Calu3 (cell line): ENCODE measurements at regions of chr19 and their contacts with region 1.

Region 1: DNA sequence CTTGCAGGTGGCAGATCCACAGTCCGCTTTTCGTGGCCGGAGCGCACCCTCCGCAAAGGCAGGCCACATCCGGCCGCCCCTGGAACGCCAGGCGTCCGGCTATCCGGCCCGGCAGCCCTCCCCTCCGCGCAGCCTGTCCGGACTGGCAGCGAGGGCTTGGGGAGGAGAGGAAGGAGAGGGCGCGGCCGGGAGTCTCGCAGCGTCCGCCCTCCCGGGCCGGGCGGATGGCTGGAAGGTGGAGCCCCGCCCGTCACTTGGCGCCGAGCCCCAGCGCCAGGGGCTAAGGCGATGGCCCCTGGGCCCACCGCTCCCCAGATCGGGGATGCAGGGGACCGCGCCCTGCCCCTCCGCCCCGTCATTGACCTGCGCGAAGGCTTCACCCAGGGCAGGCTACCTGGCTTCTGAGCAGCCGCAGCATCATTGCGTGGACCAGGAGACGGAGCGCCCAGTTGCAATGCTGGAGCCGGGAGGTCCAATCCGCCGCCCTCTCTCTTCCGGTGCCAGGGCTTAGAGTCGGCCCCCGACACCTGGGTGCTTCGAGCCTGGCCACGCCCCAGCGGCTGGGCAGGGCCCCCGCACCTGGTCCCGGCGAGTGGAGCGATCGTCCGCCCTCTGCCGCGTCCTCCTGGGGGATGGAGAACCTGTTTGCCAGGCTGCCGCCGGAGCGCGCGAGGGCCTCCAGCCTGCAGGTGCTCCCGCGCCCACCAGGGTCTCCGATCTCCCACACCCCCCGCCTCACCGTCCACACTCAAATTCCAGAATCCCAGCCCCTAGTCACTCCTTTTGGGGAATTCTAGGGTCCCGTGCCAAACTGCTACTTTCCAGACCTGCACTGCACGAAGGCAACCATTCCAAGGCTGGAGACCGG is at the start of gene FUT1:
- DNase-seq: peak; percentile 97
- H3K4me3 Mint-ChIP-seq: peak within 1 kb of the TSS; percentile 71
- H3K27ac Mint-ChIP-seq: peak within 1 kb of the TSS; percentile 25
- H3K4me1 Mint-ChIP-seq: peaks cover 22% of the 10 kb centered on the region
- H3K27me3 Mint-ChIP-seq: no peaks in the 10 kb centered on the region
- CTCF ChIP-seq: peak; percentile 38
- total RNA-seq, gene FUT1: 2.6 and 2.9 TPM in 2 replicates

Region 2: GRCh38 chr19:48713864-48714758 is 38.6 kb before region 1 on chr19:
- CTCF ChIA-PET with region 1: interaction called, 12 read pairs
- intact Hi-C with region 1: no loop called
- DNase-seq: peak; percentile 100
- H3K4me3 Mint-ChIP-seq: peak overlapping the region; percentile 89
- H3K27ac Mint-ChIP-seq: peak overlapping the region; percentile 65
- H3K4me1 Mint-ChIP-seq: peaks cover 21% of the 10 kb centered on the region
- H3K27me3 Mint-ChIP-seq: peaks cover 11% of the 10 kb centered on the region
- CTCF ChIP-seq: no peak

Region 3: DNA sequence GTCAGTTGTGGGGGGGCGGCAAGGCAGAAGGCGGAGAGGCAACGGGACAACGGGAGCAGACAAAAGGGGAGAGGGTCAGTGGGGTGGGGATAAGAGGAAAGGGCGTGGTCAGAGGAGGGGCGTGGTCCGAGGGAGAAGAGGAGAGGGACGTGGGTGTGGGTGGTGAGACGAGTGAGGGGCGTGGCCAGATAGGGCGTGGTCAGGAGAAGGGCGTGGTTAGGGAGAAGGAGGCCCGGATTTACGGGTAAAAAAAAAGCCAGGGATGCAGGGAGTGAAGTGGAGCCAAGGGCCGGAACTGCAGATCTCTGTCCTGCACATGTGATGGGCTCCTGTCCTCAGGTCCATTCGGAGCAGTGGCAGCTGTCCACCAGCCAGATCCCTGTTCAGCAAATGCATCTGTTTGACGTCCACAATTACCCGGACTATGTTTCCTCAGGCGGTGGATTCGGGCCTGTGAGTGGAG is 959.7 kb after region 1 on chr19:
- CTCF ChIA-PET with region 1: no interaction called
- intact Hi-C with region 1: no loop called
- DNase-seq: peak; percentile 43
- H3K4me3 Mint-ChIP-seq: no peak overlapping the region
- H3K27ac Mint-ChIP-seq: no peak overlapping the region
- H3K4me1 Mint-ChIP-seq: peaks cover 8% of the 10 kb centered on the region
- H3K27me3 Mint-ChIP-seq: peaks cover 24% of the 10 kb centered on the region
- CTCF ChIP-seq: no peak